IMR-90 (cell line): ENCODE measurements at regions of chr4 and their contacts with region 1.

Region 1: DNA sequence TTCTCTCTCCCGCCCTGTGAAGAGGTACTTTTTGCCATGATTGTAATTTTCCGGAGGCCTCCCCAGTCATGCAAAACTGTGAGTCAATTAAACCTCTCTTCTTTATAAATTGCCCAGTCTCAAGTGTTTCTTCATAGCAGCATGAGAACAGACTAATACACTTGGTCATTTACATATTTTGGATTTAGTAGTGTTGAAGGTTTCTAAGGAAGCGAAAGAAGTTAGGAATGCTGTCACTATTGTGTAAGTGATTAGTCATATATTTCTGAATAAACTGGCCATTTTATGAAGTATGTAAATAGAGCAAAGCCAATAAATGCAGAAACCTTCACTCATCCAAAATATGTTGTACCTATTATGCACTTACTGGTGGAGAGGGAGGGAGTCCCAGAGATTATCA is 34.4 kb upstream of the GK2 start:
- DNase-seq: no peak
- ATAC-seq: peak; percentile 64
- H3K4me3 ChIP-seq: no peak overlapping the region
- H3K27ac ChIP-seq: no peak overlapping the region
- H3K4me1 ChIP-seq: no peaks in the 10 kb centered on the region
- H3K27me3 ChIP-seq: no peaks in the 10 kb centered on the region
- CTCF ChIP-seq: no peak
- POLR2A ChIP-seq: no peak
- RAD21 ChIP-seq: no peak

Region 2: DNA sequence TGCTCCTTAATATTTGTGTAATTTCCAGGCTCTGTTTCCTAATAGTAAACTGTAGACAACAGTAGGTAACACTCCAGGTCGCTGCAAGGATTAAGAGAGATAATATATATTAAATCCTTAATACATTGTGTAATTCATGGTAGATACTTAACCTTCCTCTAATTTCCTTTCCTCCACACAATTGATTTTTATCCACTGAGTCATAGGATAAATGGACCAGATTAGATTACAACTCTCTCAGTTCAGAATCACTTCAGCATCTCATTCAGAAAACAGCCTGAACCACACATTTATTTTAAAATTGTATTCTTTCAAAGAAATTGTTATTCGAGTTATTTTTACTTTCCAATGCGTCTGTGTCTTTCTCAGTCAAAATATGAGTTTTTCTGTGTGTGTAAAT is 51.5 kb before region 1 on chr4:
- CTCF ChIA-PET with region 1: no interaction called
- POLR2A ChIA-PET with region 1: no interaction called
- dilution Hi-C with region 1: no loop called
- in situ Hi-C with region 1: no loop called
- intact Hi-C with region 1: loop called (anchors 1 kb)
- DNase-seq: no peak
- ATAC-seq: no peak
- H3K4me3 ChIP-seq: no peak overlapping the region
- H3K27ac ChIP-seq: no peak overlapping the region
- H3K4me1 ChIP-seq: no peaks in the 10 kb centered on the region
- H3K27me3 ChIP-seq: no peaks in the 10 kb centered on the region
- CTCF ChIP-seq: no peak
- POLR2A ChIP-seq: no peak
- RAD21 ChIP-seq: no peak